Activated naive CD4-positive, alpha-beta T cell treated with anti-CD3 and anti-CD28 coated beads, Interleukin-2, amount 10 ng/mL, durations not matched to agents 7 days and 5 days (primary cell): ENCODE measurements at regions of chr20 and their contacts with region 1.

Region 1: GRCh38 chr20:58650776-58651558 is at the start of gene STX16:
- DNase-seq: peak; percentile 90
- H3K4me3 Mint-ChIP-seq: peak within 1 kb of the TSS; percentile 97
- H3K27ac Mint-ChIP-seq: peak within 1 kb of the TSS; percentile 98
- H3K4me1 Mint-ChIP-seq: peaks cover 32% of the 10 kb centered on the region
- H3K27me3 Mint-ChIP-seq: peaks cover 6% of the 10 kb centered on the region

Region 2: DNA sequence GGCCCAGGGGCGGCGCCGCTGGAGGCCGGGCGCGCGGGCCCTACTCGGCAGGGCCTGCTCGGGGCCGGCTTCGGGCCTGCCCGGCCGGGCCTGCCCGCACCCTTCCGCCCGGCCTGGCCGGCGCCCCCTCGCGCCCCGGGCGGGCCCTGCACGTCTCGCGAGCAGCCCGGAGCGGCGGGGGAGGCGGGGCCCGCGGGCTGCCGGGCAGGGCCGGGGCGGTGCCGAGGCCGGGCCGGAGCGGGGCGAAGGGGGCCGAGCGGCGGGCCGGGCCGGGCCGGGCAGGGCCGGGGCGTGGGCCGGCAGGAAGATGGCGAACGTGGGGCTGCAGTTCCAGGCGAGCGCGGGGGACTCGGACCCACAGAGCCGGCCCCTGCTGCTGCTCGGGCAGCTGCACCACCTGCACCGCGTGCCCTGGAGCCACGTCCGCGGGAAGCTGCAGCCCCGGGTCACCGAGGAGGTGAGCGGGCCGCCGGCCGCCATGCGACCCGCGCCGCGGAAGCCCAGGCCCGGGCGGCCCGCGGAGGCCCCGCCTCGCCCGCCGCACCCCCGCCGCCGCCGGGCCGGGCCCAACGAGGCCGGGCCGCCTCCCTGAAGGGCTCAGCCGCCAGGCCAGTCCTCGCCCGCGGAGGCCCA is 41.7 kb after region 1 on chr20 and contains the start of gene NPEPL1:
- CTCF ChIA-PET with region 1: interaction called, 13 read pairs
- DNase-seq: peak; percentile 69
- H3K4me3 Mint-ChIP-seq: peak within 1 kb of the TSS; percentile 74
- H3K27ac Mint-ChIP-seq: peak within 1 kb of the TSS; percentile 83
- H3K4me1 Mint-ChIP-seq: peaks cover 22% of the 10 kb centered on the region
- H3K27me3 Mint-ChIP-seq: no peaks in the 10 kb centered on the region

Region 3: GRCh38 chr20:58850693-58851174 is 199.8 kb after region 1 on chr20 and contains the start of gene GNAS-AS1:
- CTCF ChIA-PET with region 1: interaction called, 21 read pairs
- DNase-seq: peak; percentile 89
- H3K4me3 Mint-ChIP-seq: peak within 1 kb of the TSS; percentile 78
- H3K27ac Mint-ChIP-seq: peak within 1 kb of the TSS; percentile 59
- H3K4me1 Mint-ChIP-seq: peaks cover 58% of the 10 kb centered on the region
- H3K27me3 Mint-ChIP-seq: peaks cover 96% of the 10 kb centered on the region